Right ventricle myocardium inferior (tissue), 1 donor: ENCODE measurements at regions of chr1 and their contacts with region 1.

Region 1: GRCh38 chr1:202348509-202349205 is at the start of gene PPP1R12B:
- DNase-seq: peak; percentile 99
- ATAC-seq: peak; percentile 99
- total RNA-seq, gene PPP1R12B: 594 TPM

Region 2: DNA sequence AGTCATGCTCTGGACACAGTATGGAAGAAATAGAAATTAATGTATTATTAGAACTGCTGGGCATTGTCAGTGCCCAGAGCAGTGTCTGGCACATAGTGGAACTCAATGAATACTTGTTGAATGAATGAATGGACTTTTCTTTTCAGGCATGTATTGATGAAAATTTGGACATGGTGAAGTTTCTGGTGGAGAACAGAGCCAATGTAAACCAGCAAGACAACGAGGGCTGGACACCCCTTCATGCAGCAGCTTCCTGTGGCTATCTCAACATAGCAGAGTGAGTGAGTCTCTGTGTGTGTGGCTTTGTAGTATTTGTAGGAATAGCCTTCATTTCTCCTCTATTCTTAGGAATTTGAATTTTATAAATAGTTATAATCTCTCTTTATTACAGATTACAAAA is 68.0 kb after region 1 on chr1:
- intact Hi-C with region 1: loop called (anchors 5 kb)
- DNase-seq: no peak
- ATAC-seq: no peak

Region 3: GRCh38 chr1:202462342-202463076 is 113.9 kb after region 1 on chr1:
- intact Hi-C with region 1: loop called (anchors 2 kb)
- DNase-seq: no peak
- ATAC-seq: peak; percentile 80

Region 4: GRCh38 chr1:202599677-202600431 is 251.2 kb after region 1 on chr1:
- intact Hi-C with region 1: loop called (anchors 10 kb)
- DNase-seq: no peak
- ATAC-seq: peak; percentile 75

Region 5: DNA sequence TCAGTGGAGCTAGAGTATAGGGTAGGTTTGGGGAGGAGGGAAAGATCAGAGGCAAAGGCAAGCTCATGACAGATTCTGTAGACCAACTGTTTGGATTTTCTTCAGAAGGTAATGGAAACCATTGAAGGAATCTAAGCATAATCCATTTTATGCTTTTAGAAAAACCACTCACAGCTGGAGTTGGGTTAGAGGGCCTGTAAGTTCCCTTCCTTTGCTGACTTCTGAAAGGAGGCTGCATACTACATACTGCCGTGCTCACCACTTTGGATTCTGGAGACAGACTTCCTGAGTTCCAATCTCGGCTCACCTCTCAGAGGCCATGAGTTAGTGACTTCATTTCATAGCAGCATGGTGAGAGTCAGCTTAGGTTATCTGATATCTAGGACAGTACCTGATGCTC is 368.0 kb after region 1 on chr1:
- intact Hi-C with region 1: loop called (anchors 5 kb)
- DNase-seq: no peak
- ATAC-seq: no peak